ENCODE measurements at regions of chr3 and their contacts with region 1.

Region 1: GRCh38 chr3:71537211-71537611 is 46.3 kb downstream of the FOXP1 start:
- DNase-seq: peak; percentile 98
- H3K4me3 Mint-ChIP-seq: peak overlapping the region; percentile 10
- H3K27ac Mint-ChIP-seq: peak overlapping the region; percentile 52
- H3K4me1 Mint-ChIP-seq: peaks cover 59% of the 10 kb centered on the region
- H3K27me3 Mint-ChIP-seq: no peaks in the 10 kb centered on the region
- CTCF ChIP-seq: no peak

Region 2: DNA sequence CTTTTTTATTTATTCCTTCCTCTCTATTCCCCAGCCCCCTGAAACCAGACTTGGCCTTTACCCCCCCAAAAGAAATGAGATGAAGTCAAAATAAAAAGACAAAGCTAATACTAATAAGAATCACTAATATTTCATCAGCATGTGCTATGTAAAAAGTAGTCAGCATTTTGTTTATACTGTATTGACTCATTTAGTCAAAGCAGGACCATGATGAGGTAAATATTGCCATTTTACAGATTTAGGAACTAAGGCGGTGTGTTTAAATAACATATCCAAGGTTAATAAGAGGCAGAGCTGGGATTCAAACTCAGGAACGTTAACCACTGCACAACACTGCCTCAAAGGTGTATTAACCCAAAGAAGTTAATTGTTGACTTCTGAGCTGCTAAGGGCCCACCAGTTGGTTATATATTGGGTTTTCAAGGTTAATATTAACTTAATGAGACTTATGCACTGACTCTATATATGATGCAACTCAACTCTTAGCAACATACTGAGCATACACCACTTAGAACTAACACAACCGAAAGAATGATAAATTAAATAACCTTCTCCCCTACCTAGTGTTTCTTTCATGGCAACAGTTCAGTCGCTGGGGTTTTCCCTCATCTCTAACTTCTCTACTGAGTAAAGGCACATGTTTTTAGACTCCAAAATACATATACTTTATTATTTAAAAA is 11.6 kb after region 1 on chr3:
- CTCF ChIA-PET with region 1: interaction called, 7 read pairs
- POLR2A ChIA-PET with region 1: interaction called, 18 read pairs
- intact Hi-C with region 1: no loop called
- DNase-seq: no peak
- H3K4me3 Mint-ChIP-seq: no peak overlapping the region
- H3K27ac Mint-ChIP-seq: no peak overlapping the region
- H3K4me1 Mint-ChIP-seq: peaks cover 17% of the 10 kb centered on the region
- H3K27me3 Mint-ChIP-seq: no peaks in the 10 kb centered on the region
- CTCF ChIP-seq: no peak

Region 3: DNA sequence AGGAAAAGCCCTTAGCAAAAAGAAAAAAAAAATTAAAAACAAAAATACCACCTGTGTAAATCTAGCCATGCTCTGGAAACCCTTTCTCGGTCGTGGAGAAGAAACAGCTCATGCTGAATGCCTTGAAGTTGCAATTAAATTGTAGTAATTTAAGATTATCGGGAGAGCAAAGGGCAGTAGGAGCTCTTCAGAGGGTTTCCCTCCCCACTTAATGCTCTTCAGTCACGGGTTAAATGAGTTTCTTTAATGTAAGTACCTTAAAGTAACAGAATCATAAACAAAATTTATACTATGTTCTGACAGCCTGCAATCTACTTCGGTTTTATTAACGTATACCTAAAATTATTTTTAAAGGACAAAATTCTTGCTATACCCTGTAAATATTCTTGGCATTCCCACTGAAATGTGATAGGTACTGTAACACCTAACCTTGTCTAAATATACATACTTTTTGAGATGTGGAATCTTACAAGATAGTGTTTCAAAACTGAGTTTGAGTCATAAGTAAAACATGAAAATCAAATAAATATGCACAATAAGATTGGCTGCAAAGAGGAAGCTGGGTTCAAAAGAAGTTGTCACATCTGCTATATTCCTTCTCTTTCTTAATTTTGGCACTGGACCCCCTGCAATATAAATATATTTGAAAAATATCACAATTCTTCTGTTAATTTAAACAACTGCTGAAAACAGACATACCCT is 41.0 kb after region 1 on chr3:
- CTCF ChIA-PET with region 1: no interaction called
- POLR2A ChIA-PET with region 1: interaction called, 26 read pairs
- intact Hi-C with region 1: loop called (anchors 2 kb)
- DNase-seq: peak; percentile 51
- H3K4me3 Mint-ChIP-seq: peak overlapping the region; percentile 38
- H3K27ac Mint-ChIP-seq: peak overlapping the region; percentile 76
- H3K4me1 Mint-ChIP-seq: peaks cover 31% of the 10 kb centered on the region
- H3K27me3 Mint-ChIP-seq: no peaks in the 10 kb centered on the region
- CTCF ChIP-seq: no peak

Measured in MCF 10A (cell line).